ENCODE measurements at regions of chr20 and their contacts with region 1.

Region 1: DNA sequence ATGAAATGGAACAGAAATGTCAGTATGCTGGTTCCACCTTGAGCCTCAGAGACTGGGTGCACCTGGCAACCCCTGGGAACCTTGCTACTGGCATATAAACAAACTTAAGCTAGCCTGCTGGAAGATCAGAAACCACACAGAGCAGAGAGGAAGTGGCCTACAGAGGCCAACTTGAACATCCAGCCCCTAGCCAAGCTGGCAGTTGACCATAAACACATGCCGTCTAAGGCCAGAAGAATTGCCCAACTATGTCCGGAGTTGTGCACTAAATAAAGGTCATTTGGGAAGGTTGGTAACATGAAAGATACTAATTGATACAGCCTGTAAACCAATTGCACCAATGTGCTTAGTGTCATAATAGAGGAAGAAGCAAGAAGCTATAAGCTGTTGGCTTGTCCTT is 266.6 kb upstream of the BTBD3 start:
- DNase-seq: no peak
- ATAC-seq: no peak
- H3K4me3 ChIP-seq: no peak overlapping the region
- H3K27ac ChIP-seq: no peak overlapping the region
- H3K4me1 ChIP-seq: no peaks in the 10 kb centered on the region
- H3K27me3 ChIP-seq: no peaks in the 10 kb centered on the region
- CTCF ChIP-seq: no peak
- POLR2A ChIP-seq: no peak

Region 2: DNA sequence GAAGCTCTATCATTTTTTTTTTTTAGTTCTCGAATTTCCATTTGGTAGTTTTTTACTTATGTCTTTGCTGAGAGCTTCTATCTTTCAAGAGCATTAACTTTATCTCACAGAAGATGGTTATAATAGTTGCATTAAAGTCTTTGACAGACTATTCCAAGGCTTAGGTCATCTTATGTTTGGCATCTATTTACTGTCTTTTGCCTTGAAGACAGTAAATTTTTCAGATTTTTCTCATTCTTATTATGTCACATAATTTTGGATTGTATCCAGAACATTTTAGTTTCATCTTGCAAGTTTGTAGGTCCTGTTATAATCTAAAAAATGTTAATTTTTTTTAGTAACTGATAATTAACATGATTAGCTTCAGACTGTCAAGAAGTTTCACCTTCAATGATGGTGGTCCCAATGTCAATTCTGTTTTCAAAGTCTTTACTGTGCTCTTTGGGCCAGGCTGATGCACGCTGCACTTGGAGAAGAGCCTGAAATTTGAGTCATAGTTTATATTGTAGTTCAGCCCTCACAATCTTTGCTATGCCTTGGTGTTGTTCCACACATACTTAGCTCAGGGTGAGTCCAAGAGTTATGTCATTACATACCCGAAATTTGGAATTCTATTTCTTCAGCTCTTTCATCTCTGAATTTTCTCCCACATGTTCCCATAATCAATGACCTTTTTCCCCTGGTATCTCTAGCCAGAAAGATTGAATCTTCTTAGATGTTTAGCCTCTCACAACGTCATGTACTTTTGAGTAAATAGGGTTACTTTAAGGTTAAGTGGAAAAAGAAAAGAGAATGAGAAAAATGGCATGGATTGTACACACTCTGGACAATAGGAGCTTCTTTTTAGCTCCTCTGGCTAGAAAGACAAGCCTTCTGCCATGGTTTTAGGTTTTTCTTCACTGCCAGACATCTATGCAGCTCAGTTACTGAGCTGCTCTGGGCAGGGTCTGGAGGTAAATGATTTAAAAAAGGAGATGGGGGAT is 156.2 kb after region 1 on chr20:
- intact Hi-C with region 1: no loop called
- DNase-seq: no peak
- ATAC-seq: peak in 3 of 4 donors; percentile 58 to 90 (median 65)
- H3K4me3 ChIP-seq: no peak overlapping the region
- H3K27ac ChIP-seq: no peak overlapping the region
- H3K4me1 ChIP-seq: peaks cover 0 to 4% (median 0%) of the 10 kb centered on the region in 12 donors
- H3K27me3 ChIP-seq: no peaks in the 10 kb centered on the region
- CTCF ChIP-seq: no peak
- POLR2A ChIP-seq: no peak

Region 3: DNA sequence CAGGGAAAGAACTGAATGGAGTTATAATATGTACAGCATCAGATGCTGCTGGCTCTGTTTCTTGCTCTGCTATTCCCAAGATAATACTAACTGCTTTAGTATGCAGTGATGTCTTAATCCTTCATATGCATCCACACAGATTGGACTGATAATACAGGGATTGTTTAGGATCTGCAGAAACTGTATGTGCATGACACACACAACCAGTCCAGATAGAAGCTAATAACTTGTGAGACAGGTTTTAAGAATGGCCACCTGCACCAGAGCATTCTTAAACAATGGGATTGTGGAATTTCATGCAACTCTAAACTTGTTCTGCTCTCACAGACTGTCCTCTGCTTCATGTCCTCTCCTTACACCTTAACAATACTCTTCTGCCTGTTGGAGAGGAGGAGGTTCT is 1448.5 kb after region 1 on chr20:
- intact Hi-C with region 1: loop called in 1 of 10 experiments (anchors 10 kb)
- DNase-seq: no peak
- ATAC-seq: no peak
- H3K4me3 ChIP-seq: no peak overlapping the region
- H3K27ac ChIP-seq: no peak overlapping the region
- H3K4me1 ChIP-seq: no peaks in the 10 kb centered on the region
- H3K27me3 ChIP-seq: no peaks in the 10 kb centered on the region
- CTCF ChIP-seq: no peak
- POLR2A ChIP-seq: no peak

Measured in heart left ventricle (tissue), 16 donors.